Aorta (tissue), 5 donors: ENCODE measurements at regions of chr1 and their contacts with region 1.

Region 1: DNA sequence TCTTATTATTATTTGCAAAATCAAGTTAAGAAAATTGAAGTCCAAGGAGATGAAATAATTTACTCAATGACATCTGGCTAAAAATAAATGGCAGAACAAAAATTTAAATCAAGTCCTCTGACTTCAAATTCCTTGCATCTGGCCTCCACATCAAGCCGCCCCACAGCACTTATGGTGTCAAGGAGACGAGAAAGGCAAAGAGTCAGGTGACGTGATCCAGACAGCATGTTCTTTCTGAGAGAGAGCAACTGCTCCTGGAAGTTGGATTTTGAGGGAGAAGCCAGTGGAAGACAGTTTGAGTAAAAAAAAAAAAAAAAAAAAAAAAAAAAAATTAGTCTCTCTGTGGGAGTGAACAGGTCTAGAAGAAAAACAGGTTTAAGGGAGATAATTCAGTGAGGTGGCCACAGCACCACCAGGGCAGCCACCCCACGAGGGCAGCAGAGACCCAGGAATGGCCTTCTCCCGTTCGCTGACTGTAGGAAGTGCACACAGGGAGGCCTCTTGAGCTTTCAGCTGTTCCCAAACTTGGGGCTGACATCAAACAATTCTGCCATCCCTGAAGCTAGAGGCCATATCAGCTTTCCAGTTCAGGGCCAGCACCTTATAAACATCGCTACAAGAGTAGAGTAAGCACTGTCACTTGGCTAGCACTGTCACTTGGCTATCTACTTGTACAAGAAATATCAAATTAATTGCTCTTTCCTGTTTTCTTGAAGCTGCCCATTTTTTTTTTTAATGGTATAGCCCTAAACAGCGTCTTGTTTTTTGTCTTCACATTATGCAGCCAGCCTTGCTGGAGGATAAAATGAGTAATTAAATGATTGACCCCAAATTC is 7.8 kb downstream of the C1orf162 start:
- DNase-seq: peak; percentile 87 to 92
- ATAC-seq: peak; percentile 93
- H3K4me3 ChIP-seq: no peak overlapping the region
- H3K27ac ChIP-seq: no peak overlapping the region
- H3K4me1 ChIP-seq: no peaks in the 10 kb centered on the region
- H3K27me3 ChIP-seq: no peaks in the 10 kb centered on the region

Region 2: DNA sequence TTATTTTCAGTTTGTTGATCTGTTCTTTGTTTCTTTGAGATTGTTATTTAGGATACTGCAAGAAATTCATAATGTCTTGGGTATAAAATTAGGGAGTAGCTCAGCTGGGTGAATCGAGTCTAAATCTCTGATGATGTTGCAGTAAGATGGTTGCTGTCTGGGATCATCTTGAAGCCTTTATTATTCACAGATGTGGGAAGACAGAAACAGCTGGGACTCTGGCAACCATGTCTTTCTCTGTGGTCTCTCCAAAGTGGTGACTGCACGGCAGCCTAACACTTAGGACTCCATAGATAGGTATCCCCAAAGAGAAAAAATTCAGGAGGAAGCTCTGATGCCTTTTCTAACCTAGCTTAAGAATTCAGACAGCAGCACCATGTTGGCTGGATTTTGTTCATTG is 190.7 kb after region 1 on chr1:
- intact Hi-C with region 1: no loop called
- DNase-seq: no peak
- ATAC-seq: no peak
- H3K4me3 ChIP-seq: no peak overlapping the region
- H3K27ac ChIP-seq: peak overlapping the region in 1 of 2 donors; percentile 63
- H3K4me1 ChIP-seq: peaks cover 6 to 9% of the 10 kb centered on the region in 2 donors
- H3K27me3 ChIP-seq: no peaks in the 10 kb centered on the region

Region 3: GRCh38 chr1:111747282-111747734 is 265.7 kb after region 1 on chr1:
- intact Hi-C with region 1: loop called (anchors 5 to 10 kb)
- DNase-seq: peak in 1 of 2 donors; percentile 66
- ATAC-seq: peak; percentile 69
- H3K4me3 ChIP-seq: no peak overlapping the region
- H3K27ac ChIP-seq: no peak overlapping the region
- H3K4me1 ChIP-seq: no peaks in the 10 kb centered on the region
- H3K27me3 ChIP-seq: no peaks in the 10 kb centered on the region

Region 4: GRCh38 chr1:111755331-111756123 is 273.9 kb after region 1 on chr1 and contains the start of gene DDX20:
- intact Hi-C with region 1: loop called in 1 of 2 experiments (anchors 10 kb)
- DNase-seq: peak; percentile 97 to 98
- ATAC-seq: peak; percentile 99
- H3K4me3 ChIP-seq: peak within 1 kb of the TSS; percentile 93 to 97
- H3K27ac ChIP-seq: peak within 1 kb of the TSS; percentile 1 to 64
- H3K4me1 ChIP-seq: no peaks in the 10 kb centered on the region
- H3K27me3 ChIP-seq: no peaks in the 10 kb centered on the region
- total RNA-seq, gene DDX20: 7.9 to 8.8 TPM

Region 5: DNA sequence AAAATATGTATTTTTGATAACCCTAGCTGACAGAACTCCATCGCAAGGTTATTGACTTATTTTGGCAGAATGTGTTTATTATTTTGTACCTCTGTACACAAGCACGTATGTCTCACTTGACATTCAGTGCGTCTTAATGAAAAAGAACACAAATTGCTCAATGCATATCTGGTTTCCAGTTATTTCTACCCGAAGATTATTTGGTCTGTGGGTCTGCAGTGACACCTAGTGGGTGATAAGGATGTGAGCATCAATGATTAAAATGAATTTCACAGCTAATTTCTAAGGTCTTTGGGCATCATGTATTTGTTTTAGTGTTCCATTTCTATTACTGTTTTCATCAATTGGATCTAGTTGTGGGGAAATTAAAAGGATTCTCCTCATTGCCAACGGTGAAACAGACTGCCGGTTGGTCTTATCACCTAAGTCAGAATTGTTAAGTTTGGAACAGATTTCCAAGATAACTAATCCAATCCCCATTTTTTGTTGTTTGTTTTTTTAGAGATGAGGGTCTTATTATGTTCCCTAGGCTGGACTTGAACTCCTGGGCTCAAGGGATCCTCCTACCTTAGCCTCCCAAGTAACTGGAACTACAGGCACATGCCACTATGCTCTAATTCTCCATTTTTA is 288.0 kb after region 1 on chr1:
- intact Hi-C with region 1: loop called in 1 of 2 experiments (anchors 2 kb)
- DNase-seq: no peak
- ATAC-seq: peak; percentile 81
- H3K4me3 ChIP-seq: no peak overlapping the region
- H3K27ac ChIP-seq: no peak overlapping the region
- H3K4me1 ChIP-seq: no peaks in the 10 kb centered on the region
- H3K27me3 ChIP-seq: no peaks in the 10 kb centered on the region